WTC11 (cell line): ENCODE measurements at regions of chr22 and their contacts with region 1.

Region 1: DNA sequence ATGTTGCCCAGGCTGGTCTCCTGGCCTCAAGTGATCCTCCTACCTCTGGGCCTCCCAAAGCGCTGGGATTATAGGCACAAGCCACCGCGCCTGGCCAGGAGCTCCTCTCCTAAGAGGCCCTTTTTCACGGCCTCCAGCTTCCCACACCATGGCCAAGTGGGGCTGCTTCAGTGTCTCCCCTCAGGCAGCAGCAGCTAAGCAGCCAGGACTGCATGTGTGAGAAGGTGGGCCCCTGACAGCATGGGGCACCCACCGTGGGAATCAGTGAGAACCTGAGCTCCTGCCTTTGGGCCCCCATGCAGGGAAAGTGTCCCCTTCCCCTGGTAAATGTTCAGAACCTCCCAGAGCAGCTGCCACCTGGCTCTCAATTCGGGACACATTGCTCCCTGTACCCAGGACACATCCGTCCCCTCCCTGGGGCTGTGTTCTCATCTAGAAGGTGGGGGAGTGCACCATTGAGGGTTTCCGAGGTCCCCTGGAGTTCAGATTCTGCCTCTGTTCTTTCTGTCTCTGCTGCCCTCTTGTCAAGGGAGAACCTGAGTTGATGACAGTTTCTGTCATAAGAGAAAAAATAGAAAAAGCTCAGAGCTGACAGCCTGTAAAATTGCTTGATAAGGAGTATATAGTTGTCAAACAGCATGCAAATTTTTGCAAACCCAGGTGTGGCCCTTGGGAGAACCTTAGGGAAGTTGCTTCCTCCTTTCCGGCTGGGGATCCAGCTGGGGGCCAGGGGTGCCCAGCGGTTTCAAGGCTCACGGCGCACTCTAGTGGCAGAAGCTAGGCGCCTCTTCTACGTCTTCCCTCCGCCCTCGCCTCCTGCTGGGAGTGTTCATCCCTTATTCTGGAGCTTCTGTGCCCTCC is 29.7 kb downstream of the FAM83F start:
- DNase-seq: peak; percentile 84
- ATAC-seq: peak; percentile 73
- H3K4me3 Mint-ChIP-seq: no peak overlapping the region
- H3K27ac Mint-ChIP-seq: no peak overlapping the region; the same call in 1 of the 2 replicates
- H3K4me1 Mint-ChIP-seq: peaks cover 11% of the 10 kb centered on the region
- H3K27me3 Mint-ChIP-seq: no peaks in the 10 kb centered on the region
- CTCF ChIP-seq: peak; percentile 67

Region 2: DNA sequence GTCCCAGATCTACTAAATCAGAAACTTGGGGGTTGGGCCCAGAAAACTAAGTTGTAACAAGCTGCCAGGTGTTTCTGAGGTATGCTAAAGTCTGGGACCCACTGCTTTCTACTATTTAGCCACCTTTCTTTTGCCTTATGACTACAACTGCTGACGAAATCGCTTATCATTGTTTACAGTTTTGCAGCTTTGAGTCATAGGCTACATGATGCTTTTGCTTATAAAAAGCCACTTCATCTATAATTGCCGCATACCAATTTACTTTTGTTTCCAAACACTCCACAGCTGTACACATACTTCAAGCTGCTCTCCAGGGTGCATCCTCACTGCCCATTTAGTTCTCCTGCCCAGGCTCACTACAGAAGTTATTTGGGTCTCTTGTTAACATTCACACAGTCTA is 275.6 kb before region 1 on chr22:
- CTCF ChIA-PET with region 1: interaction called, 10 read pairs
- POLR2A ChIA-PET with region 1: no interaction called
- DNase-seq: no peak
- ATAC-seq: no peak
- H3K4me3 Mint-ChIP-seq: no peak overlapping the region
- H3K27ac Mint-ChIP-seq: no peak overlapping the region
- H3K4me1 Mint-ChIP-seq: no peaks in the 10 kb centered on the region
- H3K27me3 Mint-ChIP-seq: no peaks in the 10 kb centered on the region; the same call in none of the 2 replicates
- CTCF ChIP-seq: no peak

Region 3: DNA sequence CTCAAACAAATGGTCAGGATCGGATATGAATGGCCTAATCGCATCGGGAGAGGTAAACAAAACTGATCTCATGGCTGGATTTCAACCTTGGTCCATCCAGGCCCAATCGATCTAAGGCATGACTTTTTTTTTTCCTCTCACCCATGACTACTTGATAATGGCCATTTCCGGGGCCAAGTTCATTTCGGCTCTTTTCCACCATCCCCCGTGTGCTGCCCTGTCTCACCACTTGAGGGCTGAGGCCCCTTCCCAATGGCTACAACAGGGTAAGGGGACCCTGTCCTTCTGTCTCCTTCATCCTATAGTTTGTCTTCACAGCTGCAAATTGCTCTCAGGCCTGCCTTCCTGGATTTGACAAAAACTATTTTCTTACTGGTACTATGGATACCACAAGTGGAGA is 96.9 kb before region 1 on chr22:
- CTCF ChIA-PET with region 1: interaction called, 146 read pairs
- POLR2A ChIA-PET with region 1: interaction called, 6 read pairs
- DNase-seq: peak; percentile 53
- ATAC-seq: peak; percentile 96
- H3K4me3 Mint-ChIP-seq: no peak overlapping the region
- H3K27ac Mint-ChIP-seq: no peak overlapping the region
- H3K4me1 Mint-ChIP-seq: peaks cover 17% of the 10 kb centered on the region
- H3K27me3 Mint-ChIP-seq: no peaks in the 10 kb centered on the region
- CTCF ChIP-seq: peak; percentile 40; the same call in 1 of the 2 replicates

Region 4: DNA sequence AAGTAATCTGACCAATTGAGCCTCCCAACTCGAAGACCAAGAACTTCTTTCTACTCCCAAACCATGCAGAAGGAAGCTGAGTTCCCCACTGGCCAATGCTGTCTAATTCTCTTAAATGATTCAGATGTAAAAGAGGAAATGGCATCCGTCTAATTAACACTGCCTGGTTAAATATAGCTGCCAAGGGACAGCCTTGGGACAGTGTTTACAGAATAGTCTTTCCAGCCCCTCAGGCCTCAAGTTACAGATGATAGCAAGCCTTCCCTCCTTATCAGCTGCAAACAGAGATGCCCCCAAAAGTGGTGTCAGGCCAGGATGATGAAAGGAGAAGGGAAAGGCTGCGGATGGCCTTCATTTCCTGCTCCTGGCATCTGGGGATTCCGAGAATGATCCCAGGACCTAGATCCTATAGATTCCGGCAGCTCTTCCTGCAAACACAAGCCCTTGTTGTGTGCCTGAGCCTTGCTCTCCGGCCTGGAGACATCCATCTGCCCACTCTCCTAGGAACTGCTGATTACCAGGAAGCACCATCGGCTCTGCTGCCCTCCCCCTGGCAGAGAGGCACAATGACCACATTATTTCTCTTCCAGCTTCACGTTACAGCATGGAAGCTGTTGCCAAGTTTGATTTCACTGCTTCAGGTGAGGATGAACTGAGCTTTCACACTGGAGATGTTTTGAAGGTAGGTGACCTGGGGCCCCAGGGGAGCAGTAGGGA is 77.8 kb before region 1 on chr22:
- CTCF ChIA-PET with region 1: interaction called, 30 read pairs
- POLR2A ChIA-PET with region 1: no interaction called
- DNase-seq: no peak
- ATAC-seq: no peak
- H3K4me3 Mint-ChIP-seq: no peak overlapping the region
- H3K27ac Mint-ChIP-seq: no peak overlapping the region
- H3K4me1 Mint-ChIP-seq: peaks cover 54% of the 10 kb centered on the region
- H3K27me3 Mint-ChIP-seq: peaks cover 6% of the 10 kb centered on the region; the same call in 1 of the 2 replicates
- CTCF ChIP-seq: no peak

Region 5: GRCh38 chr22:39973656-39974055 is 50.8 kb before region 1 on chr22:
- CTCF ChIA-PET with region 1: interaction called, 17 read pairs
- POLR2A ChIA-PET with region 1: no interaction called
- DNase-seq: no peak
- ATAC-seq: no peak
- H3K4me3 Mint-ChIP-seq: no peak overlapping the region
- H3K27ac Mint-ChIP-seq: no peak overlapping the region
- H3K4me1 Mint-ChIP-seq: peaks cover 22% of the 10 kb centered on the region
- H3K27me3 Mint-ChIP-seq: peaks cover 5% of the 10 kb centered on the region
- CTCF ChIP-seq: no peak

Region 6: DNA sequence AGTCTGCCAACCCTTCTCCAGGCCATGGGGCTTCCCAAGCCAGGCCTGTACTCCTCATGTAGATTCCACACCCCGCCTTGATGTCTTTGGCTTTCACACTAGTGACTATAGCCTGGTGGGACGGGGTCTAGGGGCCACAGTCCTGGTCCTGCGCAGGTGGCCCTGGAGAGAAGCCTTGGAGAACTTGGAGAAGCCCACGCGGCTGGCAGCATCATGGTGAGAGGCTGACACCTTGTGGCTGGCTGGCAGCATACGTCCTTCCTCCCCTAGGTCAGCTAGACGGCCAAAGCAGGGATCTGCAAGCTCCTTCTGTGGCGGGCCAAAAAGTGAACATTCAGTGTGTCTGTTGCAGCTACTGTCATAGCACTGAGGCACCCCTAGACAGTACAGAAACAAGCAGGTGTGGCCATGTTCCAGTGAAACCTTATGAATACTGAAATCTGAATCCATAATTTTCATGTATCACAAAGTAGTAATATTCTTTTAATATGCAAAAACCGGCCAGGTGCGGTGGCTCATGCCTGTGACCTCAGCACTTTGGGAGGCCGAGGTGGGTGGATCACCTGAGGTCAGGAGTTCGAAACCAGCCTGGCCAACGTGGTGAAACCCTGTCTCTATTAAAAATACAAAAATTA is 12.3 kb after region 1 on chr22:
- CTCF ChIA-PET with region 1: interaction called, 17 read pairs
- POLR2A ChIA-PET with region 1: no interaction called
- DNase-seq: peak; percentile 77
- ATAC-seq: peak; percentile 90
- H3K4me3 Mint-ChIP-seq: no peak overlapping the region
- H3K27ac Mint-ChIP-seq: no peak overlapping the region
- H3K4me1 Mint-ChIP-seq: no peaks in the 10 kb centered on the region
- H3K27me3 Mint-ChIP-seq: peaks cover 14% of the 10 kb centered on the region
- CTCF ChIP-seq: peak; percentile 57

Region 7: GRCh38 chr22:40147388-40148176 is 123.2 kb after region 1 on chr22:
- CTCF ChIA-PET with region 1: no interaction called
- POLR2A ChIA-PET with region 1: no interaction called
- DNase-seq: peak; percentile 73
- ATAC-seq: peak; percentile 86
- H3K4me3 Mint-ChIP-seq: no peak overlapping the region
- H3K27ac Mint-ChIP-seq: no peak overlapping the region
- H3K4me1 Mint-ChIP-seq: no peaks in the 10 kb centered on the region
- H3K27me3 Mint-ChIP-seq: no peaks in the 10 kb centered on the region
- CTCF ChIP-seq: no peak